T-cell (primary cell): ENCODE measurements at regions of chr9 and their contacts with region 1.

Region 1: DNA sequence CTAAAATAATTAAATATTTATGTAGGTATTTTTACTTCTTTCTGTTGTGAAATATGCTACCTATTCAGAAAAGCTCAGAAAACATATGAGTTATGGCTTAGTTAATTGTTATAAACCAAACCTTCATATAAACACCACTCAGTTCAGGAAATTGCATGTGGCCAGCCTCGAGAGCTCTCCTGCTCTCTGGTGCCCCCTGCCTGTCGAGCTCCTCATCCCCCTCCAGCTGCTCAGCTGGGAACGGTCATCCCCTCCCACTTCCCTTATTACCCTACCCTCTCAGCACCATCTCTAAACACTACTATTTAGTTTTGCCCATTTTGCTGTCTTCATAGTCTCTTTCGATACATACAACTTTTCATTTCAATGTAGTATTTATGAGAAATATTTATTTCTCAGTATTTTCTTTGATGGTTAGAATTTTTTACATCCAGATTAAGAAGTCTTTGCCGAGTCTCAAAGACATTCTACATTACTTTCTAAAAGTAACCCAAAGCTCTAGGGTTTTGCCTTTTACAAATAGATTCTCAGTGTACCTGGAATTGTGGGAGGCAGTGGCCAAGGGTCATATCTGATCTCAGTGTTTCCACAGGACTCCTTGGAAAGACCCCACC is 51.2 kb upstream of the SEMA4D start:
- DNase-seq: peak; percentile 58 to 93 (median 81)
- ATAC-seq: peak; percentile 96 to 99 (median 97)
- H3K4me3 ChIP-seq: no peak overlapping the region
- H3K4me3 Mint-ChIP-seq: peak overlapping the region in 1 of 3 donors; percentile 45
- H3K27ac ChIP-seq: peak overlapping the region; percentile 2
- H3K27ac Mint-ChIP-seq: peak overlapping the region; percentile 74 to 75
- H3K4me1 ChIP-seq: peaks cover 8 to 20% of the 10 kb centered on the region in 2 experiments
- H3K4me1 Mint-ChIP-seq: peaks cover 21 to 36% (median 28%) of the 10 kb centered on the region in 3 donors
- H3K27me3 ChIP-seq: no peaks in the 10 kb centered on the region
- H3K27me3 Mint-ChIP-seq: no peaks in the 10 kb centered on the region

Region 2: GRCh38 chr9:87599901-87600610 is 1949.1 kb before region 1 on chr9:
- CTCF ChIA-PET with region 1: no interaction called
- POLR2A ChIA-PET with region 1: no interaction called
- DNase-seq: no peak
- ATAC-seq: no peak
- H3K4me3 ChIP-seq: no peak overlapping the region
- H3K4me3 Mint-ChIP-seq: no peak overlapping the region
- H3K27ac ChIP-seq: no peak overlapping the region
- H3K27ac Mint-ChIP-seq: no peak overlapping the region
- H3K4me1 ChIP-seq: peaks cover 3 to 20% of the 10 kb centered on the region in 2 experiments
- H3K4me1 Mint-ChIP-seq: peaks cover 0 to 5% (median 4%) of the 10 kb centered on the region in 3 donors
- H3K27me3 ChIP-seq: peaks cover 0 to 8% of the 10 kb centered on the region in 2 experiments
- H3K27me3 Mint-ChIP-seq: peaks cover 0 to 19% of the 10 kb centered on the region in 2 donors

Region 3: GRCh38 chr9:89379508-89380115 is 169.5 kb before region 1 on chr9:
- CTCF ChIA-PET with region 1: interaction called in 1 of 2 experiments, 12 read pairs
- POLR2A ChIA-PET with region 1: interaction called in 1 of 2 experiments, 4 read pairs
- DNase-seq: peak in 4 of 35 experiments; percentile 16 to 60 (median 32)
- ATAC-seq: peak in 2 of 4 experiments; percentile 11 to 69
- H3K4me3 ChIP-seq: no peak overlapping the region
- H3K4me3 Mint-ChIP-seq: peak overlapping the region in 1 of 3 donors; percentile 13
- H3K27ac ChIP-seq: peak overlapping the region; percentile 32
- H3K27ac Mint-ChIP-seq: peak overlapping the region; percentile 72 to 89
- H3K4me1 ChIP-seq: peaks cover 4 to 62% of the 10 kb centered on the region in 2 experiments
- H3K4me1 Mint-ChIP-seq: peaks cover 70 to 77% (median 74%) of the 10 kb centered on the region in 3 donors
- H3K27me3 ChIP-seq: no peaks in the 10 kb centered on the region
- H3K27me3 Mint-ChIP-seq: no peaks in the 10 kb centered on the region

Region 4: DNA sequence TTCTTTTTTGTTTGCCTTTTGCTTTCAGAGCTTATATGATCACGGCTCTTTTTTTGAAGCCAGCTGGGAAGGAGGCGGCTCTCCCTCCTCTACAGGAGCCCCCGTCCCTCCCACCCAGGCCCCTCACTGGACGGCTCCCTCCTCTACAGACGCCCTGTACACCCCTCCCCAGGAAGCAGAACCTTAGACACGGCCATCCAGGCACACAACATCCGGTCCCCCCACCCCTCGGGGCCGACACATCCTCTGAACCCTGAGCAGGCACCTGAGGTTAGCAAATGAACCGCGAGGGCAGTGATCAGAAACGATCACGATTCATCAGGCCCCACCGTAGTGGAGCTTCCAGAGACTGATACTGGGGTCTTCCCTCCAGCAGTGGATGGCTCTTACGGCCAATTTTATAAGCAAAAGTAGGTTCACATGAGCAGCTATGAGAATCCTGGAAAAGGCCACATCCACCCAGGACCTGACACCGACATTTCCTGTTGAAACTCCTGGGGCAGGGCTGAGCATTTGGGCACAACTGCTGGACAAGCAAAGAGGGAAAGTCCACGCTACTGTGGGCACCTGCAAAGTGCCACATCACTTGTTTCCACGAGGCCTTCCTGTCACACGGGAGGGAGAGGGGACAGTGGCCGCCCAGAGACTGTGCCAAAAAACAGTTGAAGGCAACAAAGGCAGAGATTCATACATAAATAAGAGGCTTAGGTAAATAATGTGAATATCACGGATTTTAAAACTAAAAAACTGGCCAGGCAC is 130.1 kb before region 1 on chr9:
- CTCF ChIA-PET with region 1: interaction called, 9 to 15 read pairs
- POLR2A ChIA-PET with region 1: no interaction called
- DNase-seq: peak; percentile 42 to 82 (median 72)
- ATAC-seq: peak; percentile 70 to 84 (median 80)
- H3K4me3 ChIP-seq: peak overlapping the region in 1 of 2 donors; percentile 9
- H3K4me3 Mint-ChIP-seq: peak overlapping the region; percentile 71 to 83 (median 79)
- H3K27ac ChIP-seq: peak overlapping the region; percentile 83
- H3K27ac Mint-ChIP-seq: peak overlapping the region; percentile 95 to 99
- H3K4me1 ChIP-seq: peaks cover 29 to 91% of the 10 kb centered on the region in 2 experiments
- H3K4me1 Mint-ChIP-seq: peaks cover 80 to 95% (median 92%) of the 10 kb centered on the region in 3 donors
- H3K27me3 ChIP-seq: no peaks in the 10 kb centered on the region
- H3K27me3 Mint-ChIP-seq: no peaks in the 10 kb centered on the region

Region 5: GRCh38 chr9:89436326-89436999 is 112.7 kb before region 1 on chr9:
- CTCF ChIA-PET with region 1: interaction called, 8 to 66 read pairs
- POLR2A ChIA-PET with region 1: interaction called in 1 of 2 experiments, 12 read pairs
- DNase-seq: no peak
- ATAC-seq: no peak
- H3K4me3 ChIP-seq: no peak overlapping the region
- H3K4me3 Mint-ChIP-seq: peak overlapping the region in 2 of 3 donors; percentile 48 to 69
- H3K27ac ChIP-seq: peak overlapping the region; percentile 58
- H3K27ac Mint-ChIP-seq: peak overlapping the region; percentile 92 to 95
- H3K4me1 ChIP-seq: peaks cover 23 to 94% of the 10 kb centered on the region in 2 experiments
- H3K4me1 Mint-ChIP-seq: peaks cover 91 to 98% (median 93%) of the 10 kb centered on the region in 3 donors
- H3K27me3 ChIP-seq: no peaks in the 10 kb centered on the region
- H3K27me3 Mint-ChIP-seq: no peaks in the 10 kb centered on the region

Region 6: DNA sequence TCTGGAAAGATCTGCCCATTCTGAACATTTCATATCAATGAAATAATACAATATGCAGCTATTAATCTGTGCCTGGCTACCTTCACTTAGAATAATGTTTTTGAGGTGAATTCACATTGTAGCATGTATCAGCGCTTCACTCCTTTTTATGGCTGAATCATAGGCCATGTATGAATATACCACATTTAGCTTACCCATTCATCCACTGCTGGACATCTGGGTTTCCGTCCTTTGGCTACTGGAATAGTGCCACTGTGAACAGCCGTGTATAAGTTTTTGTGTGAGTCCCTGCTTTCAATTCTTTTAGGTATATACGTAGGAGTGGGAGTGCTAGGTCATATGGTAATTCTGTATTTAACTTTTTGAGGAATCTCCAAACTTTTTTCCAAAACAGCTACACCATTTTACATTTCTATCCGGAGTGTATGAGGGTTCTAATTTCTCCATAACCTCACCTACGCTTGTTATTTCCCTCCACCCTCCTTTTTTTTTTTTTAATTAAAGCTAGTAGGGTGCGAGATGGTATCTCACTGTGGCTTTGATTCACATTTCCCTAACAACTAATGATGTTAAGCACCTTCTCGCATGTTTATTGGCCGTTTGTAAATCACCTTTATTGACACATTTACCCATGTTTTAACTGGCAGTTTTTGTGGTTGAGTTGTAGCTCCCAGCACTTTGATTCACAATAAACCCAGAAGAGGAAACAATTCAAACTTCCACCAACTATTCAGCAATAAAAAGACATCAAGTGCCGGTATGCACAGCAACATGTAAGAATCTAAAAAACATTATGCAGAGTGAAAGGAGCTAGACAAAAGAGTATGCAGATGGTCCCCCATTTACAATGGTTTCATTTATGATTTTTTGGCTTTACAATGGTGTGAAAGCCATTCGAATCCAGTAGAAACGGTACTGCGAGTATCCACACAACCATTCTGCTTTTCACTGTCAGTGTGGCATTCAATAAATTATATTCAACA is 59.3 kb before region 1 on chr9:
- CTCF ChIA-PET with region 1: interaction called, 5 to 27 read pairs
- POLR2A ChIA-PET with region 1: interaction called in 1 of 2 experiments, 7 read pairs
- DNase-seq: peak in 10 of 35 experiments; percentile 28 to 88 (median 54)
- ATAC-seq: peak; percentile 78 to 91 (median 82)
- H3K4me3 ChIP-seq: peak overlapping the region in 1 of 2 donors; percentile 21
- H3K4me3 Mint-ChIP-seq: peak overlapping the region; percentile 67 to 96 (median 93)
- H3K27ac ChIP-seq: peak overlapping the region; percentile 76
- H3K27ac Mint-ChIP-seq: peak overlapping the region; percentile 90 to 95
- H3K4me1 ChIP-seq: peaks cover 74 to 79% of the 10 kb centered on the region in 2 experiments
- H3K4me1 Mint-ChIP-seq: peaks cover 97 to 98% (median 98%) of the 10 kb centered on the region in 3 donors
- H3K27me3 ChIP-seq: no peaks in the 10 kb centered on the region
- H3K27me3 Mint-ChIP-seq: no peaks in the 10 kb centered on the region

Region 7: GRCh38 chr9:89522261-89522958 is 26.7 kb before region 1 on chr9:
- CTCF ChIA-PET with region 1: interaction called, 5 to 17 read pairs
- POLR2A ChIA-PET with region 1: interaction called in 1 of 2 experiments, 3 read pairs
- DNase-seq: peak; percentile 45 to 92 (median 78)
- ATAC-seq: peak; percentile 89 to 91 (median 90)
- H3K4me3 ChIP-seq: no peak overlapping the region
- H3K4me3 Mint-ChIP-seq: peak overlapping the region; percentile 59 to 78 (median 69)
- H3K27ac ChIP-seq: peak overlapping the region; percentile 87
- H3K27ac Mint-ChIP-seq: peak overlapping the region; percentile 87 to 98
- H3K4me1 ChIP-seq: peaks cover 81 to 96% of the 10 kb centered on the region in 2 experiments
- H3K4me1 Mint-ChIP-seq: peaks cover 96 to 99% (median 99%) of the 10 kb centered on the region in 3 donors
- H3K27me3 ChIP-seq: no peaks in the 10 kb centered on the region
- H3K27me3 Mint-ChIP-seq: no peaks in the 10 kb centered on the region

Region 8: DNA sequence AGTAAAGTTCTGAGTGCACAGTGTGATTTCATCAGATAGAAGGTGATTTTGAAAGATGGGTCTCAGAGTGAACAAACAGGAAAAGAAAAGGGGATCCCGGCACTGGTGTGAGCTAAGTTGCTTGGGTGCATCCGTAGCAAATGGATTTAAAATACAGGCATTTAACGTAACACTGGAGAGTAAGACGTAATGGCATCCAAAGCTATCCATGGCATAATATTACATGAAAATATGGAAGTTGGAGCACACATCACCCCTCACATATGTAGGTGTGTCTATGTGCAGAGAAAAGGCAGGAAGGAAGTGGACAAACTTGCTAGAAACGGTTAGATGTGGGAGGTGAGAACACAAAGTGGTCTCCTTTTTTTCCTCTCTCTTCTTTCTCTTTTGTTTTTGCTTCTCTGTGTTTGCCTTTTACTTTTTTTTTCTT is 13.0 kb before region 1 on chr9:
- CTCF ChIA-PET with region 1: interaction called, 3 to 18 read pairs
- POLR2A ChIA-PET with region 1: interaction called in 1 of 2 experiments, 3 read pairs
- DNase-seq: peak in 9 of 35 experiments; percentile 9 to 75 (median 34)
- ATAC-seq: peak; percentile 77 to 85 (median 81)
- H3K4me3 ChIP-seq: peak overlapping the region in 1 of 2 donors; percentile 21
- H3K4me3 Mint-ChIP-seq: peak overlapping the region; percentile 52 to 67 (median 62)
- H3K27ac ChIP-seq: peak overlapping the region; percentile 82
- H3K27ac Mint-ChIP-seq: peak overlapping the region; percentile 92
- H3K4me1 ChIP-seq: peaks cover 56 to 88% of the 10 kb centered on the region in 2 experiments
- H3K4me1 Mint-ChIP-seq: peaks cover 93 to 96% (median 94%) of the 10 kb centered on the region in 3 donors
- H3K27me3 ChIP-seq: no peaks in the 10 kb centered on the region
- H3K27me3 Mint-ChIP-seq: no peaks in the 10 kb centered on the region

Region 9: DNA sequence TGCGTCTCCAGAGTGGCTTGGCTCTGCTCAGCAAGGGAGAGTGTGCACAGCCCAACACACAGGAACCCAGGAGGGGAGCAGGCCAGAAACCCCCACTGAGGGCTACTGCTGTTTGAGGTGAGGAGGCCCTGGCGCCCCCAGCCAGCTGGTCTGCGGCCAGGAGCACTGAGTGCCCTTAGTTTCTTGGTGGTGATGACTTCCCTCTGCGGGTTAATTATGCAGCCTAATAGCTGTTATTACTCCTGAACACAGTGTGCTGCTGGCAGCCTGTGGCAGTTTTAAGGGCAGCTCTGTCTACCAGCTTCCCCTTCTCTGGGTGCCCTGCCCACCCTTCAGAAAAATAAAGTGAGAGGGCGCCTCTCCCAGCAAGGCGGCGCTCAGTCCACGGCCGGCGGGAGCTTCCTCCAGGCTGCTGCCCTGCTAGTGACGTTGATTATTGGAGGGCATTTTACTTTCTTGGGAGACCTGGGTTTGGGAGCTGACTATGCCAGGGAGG is 74.8 kb after region 1 on chr9:
- CTCF ChIA-PET with region 1: no interaction called
- POLR2A ChIA-PET with region 1: no interaction called
- DNase-seq: peak in 1 of 35 experiments; percentile 12
- ATAC-seq: peak in 1 of 4 experiments; percentile 17
- H3K4me3 ChIP-seq: no peak overlapping the region
- H3K4me3 Mint-ChIP-seq: no peak overlapping the region
- H3K27ac ChIP-seq: no peak overlapping the region
- H3K27ac Mint-ChIP-seq: no peak overlapping the region
- H3K4me1 ChIP-seq: no peaks in the 10 kb centered on the region
- H3K4me1 Mint-ChIP-seq: no peaks in the 10 kb centered on the region
- H3K27me3 ChIP-seq: peaks cover 0 to 34% of the 10 kb centered on the region in 2 experiments
- H3K27me3 Mint-ChIP-seq: no peaks in the 10 kb centered on the region